Activated CD8-positive, alpha-beta T cell treated with anti-CD3 and anti-CD28 coated beads, Interleukin-2, amount 10 ng/mL, durations not matched to agents 7 days and 5 days (primary cell): ENCODE measurements at regions of chr15 and their contacts with region 1.

Region 1: DNA sequence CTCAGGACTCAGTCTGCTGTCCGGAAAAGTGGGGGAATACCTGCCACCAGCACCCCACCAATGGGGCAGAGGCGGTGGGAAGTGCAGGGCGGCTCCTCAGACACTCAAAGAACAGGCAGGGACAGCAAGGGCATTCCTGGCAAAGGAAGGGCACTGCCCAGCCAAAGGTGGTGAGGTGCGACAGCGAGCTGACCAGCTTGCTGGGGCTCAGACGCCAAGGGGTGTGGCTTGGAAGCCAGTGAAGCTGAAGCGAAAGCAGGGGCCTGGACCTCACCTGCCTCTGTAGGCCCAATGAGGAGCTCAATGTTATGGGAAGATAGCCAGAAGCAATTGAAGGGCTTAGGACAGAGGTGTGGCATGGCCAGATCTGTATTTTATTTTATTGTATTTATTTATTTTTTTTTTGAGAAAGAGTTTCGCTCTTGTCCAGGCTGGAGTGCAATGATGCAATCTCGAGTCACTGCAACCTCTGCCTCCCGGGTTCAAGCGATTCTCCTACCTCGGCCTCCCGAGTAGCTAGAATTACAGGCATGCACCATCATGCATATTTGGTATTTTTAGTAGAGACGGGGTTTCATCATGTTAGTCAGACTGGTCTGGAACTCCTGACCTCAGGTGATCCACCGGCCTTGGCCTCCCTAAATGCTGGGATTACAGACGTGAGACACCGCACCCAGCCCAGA is 4.4 kb upstream of the LMAN1L start:
- DNase-seq: no peak
- ATAC-seq: no peak
- H3K4me3 Mint-ChIP-seq: no peak overlapping the region
- H3K27ac Mint-ChIP-seq: peak overlapping the region; percentile 55
- H3K4me1 Mint-ChIP-seq: peaks cover 23% of the 10 kb centered on the region
- H3K27me3 Mint-ChIP-seq: peaks cover 7% of the 10 kb centered on the region

Region 2: DNA sequence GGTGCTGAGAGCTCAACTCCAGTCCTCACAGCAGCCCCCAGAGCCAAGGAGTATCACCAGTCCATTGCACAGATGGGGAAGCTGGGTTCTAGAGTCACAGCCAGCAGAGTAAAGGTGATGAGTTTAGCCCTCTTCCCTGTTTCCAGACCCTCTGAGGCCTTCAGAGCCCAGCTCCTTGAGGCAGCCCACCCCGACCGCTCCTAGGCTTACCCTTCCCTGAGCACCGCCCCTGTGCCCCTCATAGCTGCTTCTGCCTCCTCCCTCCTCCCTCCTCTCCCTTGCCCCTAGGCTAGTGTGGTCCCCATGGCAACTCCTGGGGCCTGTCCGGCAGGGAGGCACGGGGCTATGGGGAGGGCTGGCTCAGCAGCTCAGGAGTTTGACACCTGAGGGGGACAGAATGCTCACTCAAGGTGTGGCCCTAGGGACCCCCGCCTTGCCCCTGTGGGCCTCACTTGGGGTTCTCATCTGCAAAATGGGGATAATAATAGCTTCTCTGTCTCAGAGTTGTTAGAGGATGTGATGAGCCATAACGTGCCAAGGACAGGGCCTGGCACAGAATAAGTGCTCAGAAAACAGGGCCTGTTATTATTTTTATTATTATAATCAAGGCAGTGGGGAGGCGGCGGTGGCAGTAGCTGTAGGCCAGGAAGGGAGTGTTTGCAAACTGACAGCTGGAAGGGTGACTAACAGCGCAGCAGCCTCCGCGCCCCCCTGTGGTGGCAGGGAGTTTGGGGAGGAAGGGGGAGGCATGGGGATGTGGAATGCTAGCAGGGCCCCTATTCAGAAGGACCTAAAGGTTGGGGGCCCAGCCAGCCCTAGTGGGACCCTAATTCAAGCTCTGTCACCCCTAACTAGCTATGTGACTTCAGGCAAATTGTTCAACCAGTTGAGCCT is 14.8 kb before region 1 on chr15:
- CTCF ChIA-PET with region 1: interaction called, 27 read pairs
- POLR2A ChIA-PET with region 1: interaction called, 3 read pairs
- DNase-seq: peak; percentile 79
- ATAC-seq: peak; percentile 31
- H3K4me3 Mint-ChIP-seq: peak overlapping the region; percentile 19
- H3K27ac Mint-ChIP-seq: peak overlapping the region; percentile 82
- H3K4me1 Mint-ChIP-seq: peaks cover 89% of the 10 kb centered on the region
- H3K27me3 Mint-ChIP-seq: no peaks in the 10 kb centered on the region

Region 3: DNA sequence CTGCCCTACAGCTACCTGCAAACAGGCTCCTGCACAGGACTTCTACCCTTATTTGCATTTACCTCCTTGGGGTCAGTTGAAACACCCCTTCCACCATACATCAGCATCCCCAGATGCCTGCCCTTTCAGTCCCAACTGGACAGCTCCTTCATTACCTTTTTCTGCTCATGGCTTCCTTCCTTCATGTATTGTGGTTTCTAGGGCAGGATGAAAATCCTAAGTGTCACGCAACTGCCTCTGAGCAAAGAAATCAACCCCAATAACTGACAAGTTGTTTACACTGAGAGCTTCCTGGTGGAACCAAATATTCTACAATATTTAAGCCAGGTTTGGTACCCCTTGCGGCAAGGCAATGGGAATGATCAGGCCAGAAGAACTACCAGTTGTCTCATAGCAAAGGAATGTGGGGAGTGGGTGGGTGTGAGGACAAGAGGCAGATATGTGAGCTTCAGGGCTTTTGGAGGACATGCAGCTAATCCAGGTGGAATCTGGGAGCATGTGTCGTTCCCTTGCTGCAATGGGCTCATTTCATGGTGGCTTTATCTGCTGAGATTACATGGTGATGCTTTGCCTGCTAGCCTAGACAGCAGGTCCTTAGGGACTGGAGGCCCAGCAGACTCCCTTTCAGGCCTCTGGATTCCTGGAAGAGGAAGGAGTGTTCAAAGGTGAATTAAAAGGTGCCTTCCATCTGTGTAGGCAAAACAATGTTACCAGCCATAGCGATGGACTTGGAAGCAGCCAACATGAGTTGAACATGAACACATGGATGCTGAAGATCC is 250.1 kb after region 1 on chr15:
- CTCF ChIA-PET with region 1: no interaction called
- POLR2A ChIA-PET with region 1: no interaction called
- DNase-seq: no peak
- ATAC-seq: no peak
- H3K4me3 Mint-ChIP-seq: no peak overlapping the region
- H3K27ac Mint-ChIP-seq: peak overlapping the region; percentile 23
- H3K4me1 Mint-ChIP-seq: peaks cover 42% of the 10 kb centered on the region
- H3K27me3 Mint-ChIP-seq: peaks cover 1% of the 10 kb centered on the region